Astrocyte of the cerebellum (primary cell): ENCODE measurements at regions of chr9 and their contacts with region 1.

Region 1: GRCh38 chr9:70484210-70485130 is 70.0 kb upstream of the KLF9 start:
- DNase-seq: peak; percentile 64
- H3K4me3 ChIP-seq: no peak overlapping the region
- CTCF ChIP-seq: peak; percentile 84

Region 2: GRCh38 chr9:70419546-70420266 is 64.8 kb before region 1 on chr9:
- in situ Hi-C with region 1: loop called (anchors 5 kb)
- DNase-seq: peak; percentile 94
- H3K4me3 ChIP-seq: peak overlapping the region; percentile 48
- CTCF ChIP-seq: no peak

Region 3: GRCh38 chr9:70444904-70445303 is 39.6 kb before region 1 on chr9:
- in situ Hi-C with region 1: no loop called
- DNase-seq: no peak
- H3K4me3 ChIP-seq: no peak overlapping the region
- CTCF ChIP-seq: no peak

Region 4: DNA sequence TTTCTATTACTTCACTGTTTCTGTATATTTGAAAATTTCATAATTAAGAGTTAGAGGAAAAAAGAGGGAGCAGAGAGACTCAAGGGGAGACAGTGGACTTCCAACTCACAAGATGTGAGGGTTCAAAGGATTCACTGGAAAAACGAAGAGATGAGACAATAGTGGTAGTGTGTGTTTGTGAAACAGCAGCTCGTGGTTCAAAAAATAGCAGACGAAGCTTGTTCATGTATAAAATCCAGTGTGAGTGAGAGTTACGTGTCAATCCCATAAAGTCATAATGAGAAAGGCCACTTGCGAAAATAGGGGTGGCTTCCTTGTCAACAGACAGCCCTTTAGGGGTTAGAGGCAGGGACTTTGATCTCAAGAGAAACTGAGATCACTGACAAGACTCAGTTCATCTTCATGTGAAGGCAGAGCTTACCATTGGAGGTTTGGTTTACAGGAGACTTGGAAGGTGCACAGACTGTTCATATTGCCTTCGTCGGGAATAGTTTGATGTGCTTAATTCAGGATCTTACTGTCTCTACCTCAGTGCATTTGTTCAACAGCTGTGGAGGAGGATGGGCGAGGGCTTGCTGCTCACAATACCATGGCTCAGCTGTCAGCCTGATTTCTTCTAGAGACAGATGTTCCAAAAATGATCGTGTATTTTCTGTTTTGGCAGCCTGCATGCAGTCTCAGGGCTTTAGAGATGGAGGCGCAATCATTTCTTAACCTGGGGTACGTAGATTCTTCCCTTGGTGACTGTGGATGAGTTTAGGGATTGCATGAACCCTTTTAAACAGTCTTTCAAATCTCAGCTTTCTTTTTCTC is 35.6 kb after region 1 on chr9:
- in situ Hi-C with region 1: loop called (anchors 5 kb)
- DNase-seq: no peak
- H3K4me3 ChIP-seq: no peak overlapping the region
- CTCF ChIP-seq: no peak

Region 5: GRCh38 chr9:70553707-70554673 is 69.5 kb after region 1 on chr9:
- in situ Hi-C with region 1: loop called (anchors 5 kb)
- DNase-seq: peak; percentile 70
- H3K4me3 ChIP-seq: no peak overlapping the region
- CTCF ChIP-seq: no peak

Region 6: GRCh38 chr9:70589571-70590314 is 105.3 kb after region 1 on chr9:
- in situ Hi-C with region 1: loop called (anchors 10 kb)
- DNase-seq: no peak
- H3K4me3 ChIP-seq: no peak overlapping the region
- CTCF ChIP-seq: no peak